PC-9 (cell line): ENCODE measurements at regions of chr11 and their contacts with region 1.

Region 1: GRCh38 chr11:69888483-69889076 is 69.4 kb upstream of the FGF3 start:
- DNase-seq: peak; percentile 70 to 85
- H3K4me3 ChIP-seq: no peak overlapping the region
- H3K27ac ChIP-seq: no peak overlapping the region
- H3K4me1 ChIP-seq: peaks cover 41% of the 10 kb centered on the region
- H3K27me3 ChIP-seq: no peaks in the 10 kb centered on the region
- CTCF ChIP-seq: peak; percentile 97

Region 2: DNA sequence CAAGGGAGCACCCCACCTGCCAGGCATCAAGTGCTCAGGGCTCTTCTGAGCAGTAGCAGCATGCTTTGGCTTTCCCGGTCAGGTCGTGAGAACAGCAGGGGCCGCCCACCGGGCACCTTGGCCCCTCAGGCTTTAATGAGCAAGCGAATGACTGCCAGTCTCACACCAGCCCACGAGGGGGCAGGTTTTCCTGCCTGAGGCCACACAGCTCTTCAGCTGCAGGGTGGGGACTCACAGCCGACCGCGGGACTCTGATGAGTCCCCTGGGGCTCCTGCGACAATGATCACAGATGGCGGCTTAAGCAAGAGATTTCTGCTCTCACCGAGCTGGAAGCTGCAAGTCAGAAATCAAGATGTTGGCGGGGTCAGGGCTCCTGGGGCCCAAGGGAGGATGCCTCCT is 170.4 kb before region 1 on chr11:
- CTCF ChIA-PET with region 1: no interaction called
- POLR2A ChIA-PET with region 1: no interaction called
- intact Hi-C with region 1: loop called (anchors 1 kb)
- DNase-seq: peak; percentile 47 to 61
- H3K4me3 ChIP-seq: no peak overlapping the region
- H3K27ac ChIP-seq: no peak overlapping the region
- H3K4me1 ChIP-seq: no peaks in the 10 kb centered on the region
- H3K27me3 ChIP-seq: no peaks in the 10 kb centered on the region
- CTCF ChIP-seq: peak; percentile 83